IMR-90 (cell line): ENCODE measurements at regions of chr17 and their contacts with region 1.

Region 1: GRCh38 chr17:48074315-48075081 is 26.3 kb downstream of the NFE2L1 start:
- DNase-seq: peak; percentile 82
- ATAC-seq: peak; percentile 95
- H3K4me3 ChIP-seq: no peak overlapping the region
- H3K27ac ChIP-seq: no peak overlapping the region
- H3K4me1 ChIP-seq: peaks cover 2% of the 10 kb centered on the region
- H3K27me3 ChIP-seq: no peaks in the 10 kb centered on the region
- CTCF ChIP-seq: peak; percentile 93
- POLR2A ChIP-seq: no peak
- RAD21 ChIP-seq: peak; percentile 91

Region 2: GRCh38 chr17:48037036-48037837 is 37.3 kb before region 1 on chr17 and contains the start of gene COPZ2:
- CTCF ChIA-PET with region 1: no interaction called
- POLR2A ChIA-PET with region 1: no interaction called
- dilution Hi-C with region 1: no loop called
- in situ Hi-C with region 1: loop called (anchors 5 kb)
- intact Hi-C with region 1: loop called (anchors 1 kb)
- DNase-seq: peak; percentile 44
- ATAC-seq: peak; percentile 90
- H3K4me3 ChIP-seq: peak within 1 kb of the TSS; percentile 65
- H3K27ac ChIP-seq: peak within 1 kb of the TSS; percentile 66
- H3K4me1 ChIP-seq: peaks cover 10% of the 10 kb centered on the region
- H3K27me3 ChIP-seq: no peaks in the 10 kb centered on the region
- CTCF ChIP-seq: peak; percentile 58
- POLR2A ChIP-seq: no peak
- RAD21 ChIP-seq: peak; percentile 38
- total RNA-seq, gene COPZ2: 41.0 and 60.5 TPM in 2 replicates

Region 3: GRCh38 chr17:48113201-48113676 is 38.7 kb after region 1 on chr17:
- CTCF ChIA-PET with region 1: no interaction called
- POLR2A ChIA-PET with region 1: no interaction called
- dilution Hi-C with region 1: no loop called
- in situ Hi-C with region 1: no loop called
- intact Hi-C with region 1: no loop called
- DNase-seq: no peak
- ATAC-seq: no peak
- H3K4me3 ChIP-seq: no peak overlapping the region
- H3K27ac ChIP-seq: no peak overlapping the region
- H3K4me1 ChIP-seq: no peaks in the 10 kb centered on the region
- H3K27me3 ChIP-seq: no peaks in the 10 kb centered on the region
- CTCF ChIP-seq: no peak
- POLR2A ChIP-seq: no peak
- RAD21 ChIP-seq: no peak

Region 4: GRCh38 chr17:48131216-48131824 is 56.8 kb after region 1 on chr17:
- CTCF ChIA-PET with region 1: interaction called, 3 read pairs
- POLR2A ChIA-PET with region 1: no interaction called
- dilution Hi-C with region 1: no loop called
- in situ Hi-C with region 1: no loop called
- intact Hi-C with region 1: loop called (anchors 2 kb)
- DNase-seq: peak; percentile 66
- ATAC-seq: peak; percentile 91
- H3K4me3 ChIP-seq: no peak overlapping the region
- H3K27ac ChIP-seq: no peak overlapping the region
- H3K4me1 ChIP-seq: no peaks in the 10 kb centered on the region
- H3K27me3 ChIP-seq: peaks cover 11% of the 10 kb centered on the region
- CTCF ChIP-seq: peak; percentile 86
- POLR2A ChIP-seq: no peak
- RAD21 ChIP-seq: peak; percentile 87